Left colon (tissue), 2 donors: ENCODE measurements at regions of chr20 and their contacts with region 1.

Region 1: DNA sequence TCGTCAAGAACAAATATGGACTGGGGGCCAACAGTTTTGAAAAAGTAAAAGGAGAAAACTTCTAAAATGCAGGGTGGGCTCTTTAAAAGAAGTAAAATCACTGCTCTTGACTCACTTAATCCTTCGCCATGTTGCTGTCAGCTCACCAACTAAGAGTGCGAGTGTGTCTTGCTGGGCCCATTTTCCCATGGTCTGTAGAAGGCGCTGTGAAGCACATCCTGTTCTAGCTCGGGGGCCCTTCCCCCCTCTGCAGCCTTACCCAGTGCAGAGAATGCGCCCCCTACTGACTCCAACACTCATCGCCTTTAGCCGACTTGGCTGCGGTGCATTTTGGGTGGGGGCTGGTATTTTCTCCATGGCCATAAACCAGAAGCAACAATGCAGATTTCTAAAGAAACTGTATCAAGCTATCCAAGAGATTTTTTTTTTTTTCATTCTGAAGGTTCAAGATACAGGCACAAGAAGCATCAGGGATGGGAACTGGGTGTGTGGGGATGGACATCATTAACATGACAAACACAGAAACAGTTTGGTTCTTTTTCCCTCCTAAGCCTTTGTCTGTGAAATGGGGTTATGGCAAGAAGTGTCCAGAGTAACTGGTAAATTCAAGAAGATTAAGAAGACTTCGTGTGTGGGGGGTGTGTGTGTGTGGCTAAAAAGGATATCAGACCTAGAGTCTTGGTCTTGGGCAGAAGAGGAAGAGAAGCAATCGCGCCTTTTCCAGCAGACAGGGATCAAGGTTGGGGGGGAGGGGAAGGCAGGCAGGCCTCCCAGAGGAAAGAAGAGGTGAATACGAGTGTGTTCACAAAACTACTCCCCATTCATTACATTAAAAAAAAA is 1.7 kb downstream of the ADNP start:
- DNase-seq: peak; percentile 94 to 95
- ATAC-seq: peak; percentile 68

Region 2: GRCh38 chr20:50790651-50791277 is 138.8 kb before region 1 on chr20:
- intact Hi-C with region 1: loop called in 1 of 2 experiments (anchors 5 kb)
- DNase-seq: peak; percentile 92 to 93
- ATAC-seq: peak; percentile 88

Region 3: GRCh38 chr20:50992733-50993457 is 63.4 kb after region 1 on chr20:
- intact Hi-C with region 1: no loop called
- DNase-seq: peak; percentile 20 to 28
- ATAC-seq: peak; percentile 92